Esophagus muscularis mucosa (tissue), 4 donors: ENCODE measurements at regions of chr12 and their contacts with region 1.

Region 1: DNA sequence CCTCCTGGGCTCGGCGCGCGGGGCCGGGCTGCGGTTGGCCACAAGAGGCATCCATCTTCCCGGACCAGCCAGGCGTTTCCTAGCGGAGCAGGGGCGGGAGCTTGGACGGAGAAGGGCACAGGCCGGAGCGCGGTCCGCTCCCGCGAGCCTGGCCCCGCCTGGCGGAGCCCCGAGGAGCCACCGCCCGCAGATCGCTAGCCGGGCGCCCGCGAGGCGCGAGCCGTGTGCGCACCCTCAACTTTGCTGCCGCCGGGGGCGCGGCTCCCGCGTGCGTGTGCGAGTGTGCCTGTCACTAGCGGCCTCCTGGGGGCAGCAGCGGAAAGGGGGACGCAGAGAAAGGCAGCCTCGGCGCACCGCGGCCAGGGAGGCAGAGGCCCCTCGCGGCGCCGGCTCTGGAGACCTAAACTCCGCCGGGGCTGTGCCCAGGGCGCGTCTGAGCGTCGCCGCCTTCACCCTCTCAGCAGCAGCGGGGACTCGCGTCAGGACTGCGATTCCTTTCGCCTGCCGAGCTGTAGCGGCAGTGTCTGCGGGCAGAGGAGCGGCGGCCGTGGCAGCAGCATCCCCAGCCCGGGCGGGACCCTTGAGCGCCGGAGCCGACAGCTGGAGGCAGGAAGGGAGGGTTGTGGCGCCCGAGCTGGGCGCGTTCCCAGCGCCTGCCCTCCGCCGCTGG is 644 bp upstream of the SRGAP1 start:
- DNase-seq: peak; percentile 96
- H3K4me3 ChIP-seq: peak overlapping the region; percentile 68 to 97 (median 92)
- H3K27ac ChIP-seq: peak overlapping the region; percentile 93 to 98 (median 96)
- H3K4me1 ChIP-seq: peaks cover 13 to 33% (median 28%) of the 10 kb centered on the region in 4 donors
- H3K27me3 ChIP-seq: no peaks in the 10 kb centered on the region
- CTCF ChIP-seq: peak; percentile 87 to 93 (median 93)
- EP300 ChIP-seq: no peak
- POLR2A ChIP-seq: no peak

Region 2: GRCh38 chr12:63897931-63898330 is 54.1 kb after region 1 on chr12:
- intact Hi-C with region 1: no loop called
- DNase-seq: no peak
- H3K4me3 ChIP-seq: no peak overlapping the region
- H3K27ac ChIP-seq: no peak overlapping the region
- H3K4me1 ChIP-seq: peaks cover 6 to 43% (median 19%) of the 10 kb centered on the region in 4 donors
- H3K27me3 ChIP-seq: no peaks in the 10 kb centered on the region
- CTCF ChIP-seq: no peak
- EP300 ChIP-seq: no peak
- POLR2A ChIP-seq: no peak

Region 3: DNA sequence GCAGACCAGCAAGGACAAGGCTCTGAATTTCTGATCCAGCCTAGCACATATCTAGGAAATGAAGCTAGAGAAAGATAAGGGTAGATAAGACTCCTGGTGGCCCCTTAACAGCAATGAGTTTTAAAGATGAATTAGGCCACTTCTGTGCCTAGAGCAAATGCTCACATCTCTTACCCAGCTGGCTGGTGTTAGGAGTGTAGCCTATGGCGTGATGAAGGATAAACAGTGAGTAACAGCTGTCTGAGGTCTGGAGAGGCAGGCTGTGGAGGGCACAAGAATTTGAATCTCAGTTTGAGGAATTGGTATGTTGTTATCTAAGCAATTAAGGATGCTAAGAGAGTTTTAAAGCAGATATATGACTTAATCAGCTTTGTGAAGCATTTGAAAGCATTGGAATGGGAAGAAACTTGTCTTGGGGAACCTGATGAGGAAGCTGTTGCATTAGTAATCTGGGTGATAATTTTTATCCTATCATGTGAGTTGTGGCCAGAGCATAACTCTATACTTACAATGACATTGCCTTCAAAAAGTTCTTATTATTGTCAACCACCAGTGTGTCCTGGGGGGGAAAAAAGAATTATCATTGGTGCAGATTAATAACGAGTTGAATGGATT is 162.5 kb after region 1 on chr12:
- intact Hi-C with region 1: no loop called
- DNase-seq: no peak
- H3K4me3 ChIP-seq: no peak overlapping the region
- H3K27ac ChIP-seq: no peak overlapping the region
- H3K4me1 ChIP-seq: peaks cover 0 to 14% (median 9%) of the 10 kb centered on the region in 4 donors
- H3K27me3 ChIP-seq: no peaks in the 10 kb centered on the region
- CTCF ChIP-seq: no peak
- EP300 ChIP-seq: no peak
- POLR2A ChIP-seq: no peak

Region 4: GRCh38 chr12:64039281-64039871 is 195.5 kb after region 1 on chr12:
- intact Hi-C with region 1: loop called (anchors 10 kb)
- DNase-seq: peak; percentile 91
- H3K4me3 ChIP-seq: peak overlapping the region in 3 of 4 donors; percentile 24 to 31 (median 27)
- H3K27ac ChIP-seq: peak overlapping the region; percentile 40 to 65 (median 61)
- H3K4me1 ChIP-seq: peaks cover 3 to 31% (median 27%) of the 10 kb centered on the region in 4 donors
- H3K27me3 ChIP-seq: no peaks in the 10 kb centered on the region
- CTCF ChIP-seq: no peak
- EP300 ChIP-seq: no peak
- POLR2A ChIP-seq: no peak

Region 5: GRCh38 chr12:64103825-64104740 is 260.2 kb after region 1 on chr12:
- intact Hi-C with region 1: loop called (anchors 5 kb)
- DNase-seq: no peak
- H3K4me3 ChIP-seq: peak overlapping the region in 1 of 4 donors; percentile 1
- H3K27ac ChIP-seq: peak overlapping the region; percentile 68 to 79 (median 75)
- H3K4me1 ChIP-seq: peaks cover 0 to 47% (median 34%) of the 10 kb centered on the region in 4 donors
- H3K27me3 ChIP-seq: no peaks in the 10 kb centered on the region
- CTCF ChIP-seq: no peak
- EP300 ChIP-seq: no peak
- POLR2A ChIP-seq: no peak

Region 6: GRCh38 chr12:64181504-64182291 is 337.8 kb after region 1 on chr12:
- intact Hi-C with region 1: loop called (anchors 1 kb)
- DNase-seq: no peak
- H3K4me3 ChIP-seq: peak overlapping the region in 1 of 4 donors; percentile 10
- H3K27ac ChIP-seq: peak overlapping the region; percentile 47 to 72 (median 62)
- H3K4me1 ChIP-seq: peaks cover 13 to 22% (median 18%) of the 10 kb centered on the region in 4 donors
- H3K27me3 ChIP-seq: no peaks in the 10 kb centered on the region
- CTCF ChIP-seq: peak; percentile 73 to 81 (median 76)
- EP300 ChIP-seq: no peak
- POLR2A ChIP-seq: no peak

Region 7: GRCh38 chr12:64222009-64222765 is 378.3 kb after region 1 on chr12 and contains the start of gene KICS2:
- intact Hi-C with region 1: loop called (anchors 1 kb)
- DNase-seq: peak; percentile 98
- H3K4me3 ChIP-seq: peak within 1 kb of the TSS; percentile 72 to 93 (median 85)
- H3K27ac ChIP-seq: peak within 1 kb of the TSS; percentile 92 to 97 (median 94)
- H3K4me1 ChIP-seq: peaks cover 6 to 14% (median 7%) of the 10 kb centered on the region in 4 donors
- H3K27me3 ChIP-seq: no peaks in the 10 kb centered on the region
- CTCF ChIP-seq: peak in 2 of 3 experiments; percentile 2 to 7
- EP300 ChIP-seq: no peak
- POLR2A ChIP-seq: peak; percentile 92
- total RNA-seq, gene KICS2: 4.5 to 8.8 (median 6.4) TPM

Region 8: DNA sequence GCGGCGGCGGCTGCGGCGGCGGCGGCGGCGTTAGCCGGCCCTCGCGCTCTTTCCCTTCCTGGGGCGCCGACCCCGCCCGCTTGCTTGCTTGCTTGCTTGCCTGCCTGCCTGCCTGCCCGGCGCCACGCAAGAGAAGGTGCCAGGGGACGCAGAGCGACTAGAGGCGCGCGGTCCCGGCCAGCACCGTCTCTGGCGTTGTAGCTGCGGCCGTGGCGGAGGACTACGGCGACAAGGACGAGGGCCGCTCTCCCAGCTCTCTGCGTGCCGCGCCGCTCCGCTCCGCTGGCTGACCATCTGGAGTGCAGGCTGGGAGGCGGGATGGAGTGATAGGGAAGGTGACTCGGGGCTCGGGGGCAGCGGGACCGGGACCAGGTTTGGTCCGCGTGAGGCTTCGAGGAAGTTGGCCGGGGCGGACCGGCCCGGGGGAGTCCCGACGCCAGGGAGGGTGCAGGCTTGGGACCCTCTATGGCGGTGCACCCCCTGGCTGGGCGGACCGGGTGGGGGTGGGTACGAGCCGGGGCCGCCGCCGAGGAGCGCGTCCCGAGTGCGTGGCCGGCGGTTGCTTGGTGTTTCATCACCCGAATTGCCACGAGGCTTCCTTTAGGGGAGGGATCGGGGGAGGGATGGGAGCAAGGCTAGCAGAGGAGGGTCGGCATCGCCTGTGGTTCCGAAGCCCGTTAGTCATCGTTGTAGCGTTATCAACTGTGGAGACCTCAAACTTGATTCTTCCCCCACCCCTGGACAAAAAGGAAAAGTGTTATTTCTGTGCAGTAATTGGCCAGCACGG is 560.8 kb after region 1 on chr12:
- intact Hi-C with region 1: loop called (anchors 5 kb)
- DNase-seq: no peak
- H3K4me3 ChIP-seq: peak overlapping the region; percentile 76 to 100 (median 94)
- H3K27ac ChIP-seq: peak overlapping the region; percentile 98 to 99 (median 98)
- H3K4me1 ChIP-seq: peaks cover 10 to 21% (median 20%) of the 10 kb centered on the region in 4 donors
- H3K27me3 ChIP-seq: no peaks in the 10 kb centered on the region
- CTCF ChIP-seq: no peak
- EP300 ChIP-seq: no peak
- POLR2A ChIP-seq: no peak